CD4-positive, alpha-beta T cell (primary cell): ENCODE measurements at regions of chr1 and their contacts with region 1.

Region 1: GRCh38 chr1:109483672-109484518 is at the start of gene ATXN7L2:
- DNase-seq: peak; percentile 86 to 98 (median 92)
- ATAC-seq: peak; percentile 83
- H3K4me3 ChIP-seq: peak within 1 kb of the TSS; percentile 76
- H3K4me3 Mint-ChIP-seq: peak within 1 kb of the TSS; percentile 93
- H3K27ac ChIP-seq: peak within 1 kb of the TSS; percentile 74 to 78
- H3K27ac Mint-ChIP-seq: peak within 1 kb of the TSS; percentile 87
- H3K4me1 ChIP-seq: peaks cover 23% of the 10 kb centered on the region
- H3K4me1 Mint-ChIP-seq: peaks cover 39% of the 10 kb centered on the region
- H3K27me3 ChIP-seq: no peaks in the 10 kb centered on the region
- H3K27me3 Mint-ChIP-seq: peaks cover 1% of the 10 kb centered on the region
- CTCF ChIP-seq: no peak
- total RNA-seq, gene ATXN7L2: 11.8 to 13.1 TPM

Region 2: GRCh38 chr1:109112652-109113285 is 371.1 kb before region 1 on chr1:
- CTCF ChIA-PET with region 1: no interaction called
- POLR2A ChIA-PET with region 1: no interaction called
- intact Hi-C with region 1: loop called in 1 of 2 experiments (anchors 10 kb)
- DNase-seq: peak; percentile 84 to 94 (median 89)
- ATAC-seq: peak; percentile 52
- H3K4me3 ChIP-seq: peak overlapping the region; percentile 63
- H3K4me3 Mint-ChIP-seq: peak overlapping the region; percentile 94
- H3K27ac ChIP-seq: peak overlapping the region in 1 of 2 donors; percentile 51
- H3K27ac Mint-ChIP-seq: peak overlapping the region; percentile 98
- H3K4me1 ChIP-seq: peaks cover 26% of the 10 kb centered on the region
- H3K4me1 Mint-ChIP-seq: peaks cover 31% of the 10 kb centered on the region
- H3K27me3 ChIP-seq: no peaks in the 10 kb centered on the region
- H3K27me3 Mint-ChIP-seq: peaks cover 9% of the 10 kb centered on the region
- CTCF ChIP-seq: peak; percentile 93

Region 3: GRCh38 chr1:109282952-109283747 is 200.7 kb before region 1 on chr1 and contains the start of gene PSRC1:
- CTCF ChIA-PET with region 1: no interaction called
- POLR2A ChIA-PET with region 1: interaction called, 4 read pairs
- intact Hi-C with region 1: loop called in 1 of 2 experiments (anchors 5 kb)
- DNase-seq: peak; percentile 81 to 94 (median 85)
- ATAC-seq: peak; percentile 93
- H3K4me3 ChIP-seq: peak within 1 kb of the TSS; percentile 70
- H3K4me3 Mint-ChIP-seq: peak within 1 kb of the TSS; percentile 94
- H3K27ac ChIP-seq: peak within 1 kb of the TSS; percentile 31 to 59
- H3K27ac Mint-ChIP-seq: peak within 1 kb of the TSS; percentile 78
- H3K4me1 ChIP-seq: peaks cover 27% of the 10 kb centered on the region
- H3K4me1 Mint-ChIP-seq: peaks cover 19% of the 10 kb centered on the region
- H3K27me3 ChIP-seq: no peaks in the 10 kb centered on the region
- H3K27me3 Mint-ChIP-seq: no peaks in the 10 kb centered on the region
- CTCF ChIP-seq: peak; percentile 71
- total RNA-seq, gene PSRC1: 0.22 to 0.91 TPM

Region 4: GRCh38 chr1:109454497-109455133 is 29.3 kb before region 1 on chr1:
- CTCF ChIA-PET with region 1: no interaction called
- POLR2A ChIA-PET with region 1: no interaction called
- intact Hi-C with region 1: no loop called
- DNase-seq: no peak
- ATAC-seq: no peak
- H3K4me3 ChIP-seq: no peak overlapping the region
- H3K4me3 Mint-ChIP-seq: no peak overlapping the region
- H3K27ac ChIP-seq: no peak overlapping the region
- H3K27ac Mint-ChIP-seq: no peak overlapping the region
- H3K4me1 ChIP-seq: no peaks in the 10 kb centered on the region
- H3K4me1 Mint-ChIP-seq: no peaks in the 10 kb centered on the region
- H3K27me3 ChIP-seq: peaks cover 6 to 10% of the 10 kb centered on the region in 2 experiments
- H3K27me3 Mint-ChIP-seq: peaks cover 62% of the 10 kb centered on the region
- CTCF ChIP-seq: no peak

Region 5: DNA sequence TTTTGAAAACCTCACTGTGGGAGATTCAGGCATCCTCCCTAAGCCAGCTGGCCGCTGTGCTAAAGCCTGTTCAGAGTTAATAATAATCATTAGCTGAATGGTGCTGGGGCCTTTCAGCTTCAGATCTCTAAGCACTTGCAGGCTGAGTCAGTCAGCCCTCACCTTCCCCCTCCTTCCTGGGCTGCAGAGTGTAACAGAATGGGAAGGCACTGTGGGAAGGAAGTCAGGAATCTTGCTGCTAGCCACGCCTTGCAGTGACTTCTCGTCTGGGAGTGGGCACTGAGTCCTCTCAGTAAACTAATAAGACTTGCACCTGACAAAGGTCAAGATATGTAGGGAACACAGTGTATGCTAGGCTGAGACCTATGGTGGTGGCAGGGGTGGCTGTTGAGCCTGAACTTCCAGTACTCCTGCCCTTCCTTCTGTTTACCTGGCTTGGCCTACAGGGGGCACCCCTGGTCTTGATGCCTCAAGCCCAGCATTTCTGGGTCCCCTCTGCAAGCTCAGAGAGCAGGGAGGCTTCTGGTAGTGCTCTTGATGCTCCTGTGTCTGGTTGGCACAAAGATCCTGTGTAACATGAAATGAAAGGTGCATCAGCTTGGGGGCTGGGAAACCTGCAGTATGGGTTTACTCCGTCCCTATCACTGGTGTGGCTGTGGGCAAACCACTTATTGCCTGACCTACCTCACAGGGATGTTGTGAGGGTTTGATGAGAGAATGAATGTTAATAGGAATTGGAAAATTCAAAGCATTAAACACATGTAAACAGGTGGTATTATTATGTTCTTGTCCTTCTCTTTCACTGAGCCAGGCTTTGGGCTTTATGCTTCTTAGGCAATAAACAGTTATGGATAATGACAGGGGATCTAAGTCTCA is 16.0 kb after region 1 on chr1:
- CTCF ChIA-PET with region 1: no interaction called
- POLR2A ChIA-PET with region 1: interaction called, 21 read pairs
- intact Hi-C with region 1: no loop called
- DNase-seq: peak; percentile 27 to 84 (median 67)
- ATAC-seq: peak; percentile 32
- H3K4me3 ChIP-seq: no peak overlapping the region
- H3K4me3 Mint-ChIP-seq: peak overlapping the region; percentile 54
- H3K27ac ChIP-seq: peak overlapping the region; percentile 90 to 94
- H3K27ac Mint-ChIP-seq: peak overlapping the region; percentile 95
- H3K4me1 ChIP-seq: peaks cover 99% of the 10 kb centered on the region
- H3K4me1 Mint-ChIP-seq: peaks cover 93% of the 10 kb centered on the region
- H3K27me3 ChIP-seq: no peaks in the 10 kb centered on the region
- H3K27me3 Mint-ChIP-seq: no peaks in the 10 kb centered on the region
- CTCF ChIP-seq: peak; percentile 58

Region 6: GRCh38 chr1:109620841-109621286 is 137.0 kb after region 1 on chr1:
- CTCF ChIA-PET with region 1: no interaction called
- POLR2A ChIA-PET with region 1: interaction called, 5 read pairs
- intact Hi-C with region 1: loop called in 1 of 2 experiments (anchors 5 kb)
- DNase-seq: peak; percentile 91 to 99 (median 97)
- ATAC-seq: peak; percentile 86
- H3K4me3 ChIP-seq: peak overlapping the region; percentile 91
- H3K4me3 Mint-ChIP-seq: peak overlapping the region; percentile 99
- H3K27ac ChIP-seq: peak overlapping the region; percentile 85 to 95
- H3K27ac Mint-ChIP-seq: peak overlapping the region; percentile 89
- H3K4me1 ChIP-seq: peaks cover 80% of the 10 kb centered on the region
- H3K4me1 Mint-ChIP-seq: peaks cover 82% of the 10 kb centered on the region
- H3K27me3 ChIP-seq: no peaks in the 10 kb centered on the region
- H3K27me3 Mint-ChIP-seq: no peaks in the 10 kb centered on the region
- CTCF ChIP-seq: no peak

Region 7: DNA sequence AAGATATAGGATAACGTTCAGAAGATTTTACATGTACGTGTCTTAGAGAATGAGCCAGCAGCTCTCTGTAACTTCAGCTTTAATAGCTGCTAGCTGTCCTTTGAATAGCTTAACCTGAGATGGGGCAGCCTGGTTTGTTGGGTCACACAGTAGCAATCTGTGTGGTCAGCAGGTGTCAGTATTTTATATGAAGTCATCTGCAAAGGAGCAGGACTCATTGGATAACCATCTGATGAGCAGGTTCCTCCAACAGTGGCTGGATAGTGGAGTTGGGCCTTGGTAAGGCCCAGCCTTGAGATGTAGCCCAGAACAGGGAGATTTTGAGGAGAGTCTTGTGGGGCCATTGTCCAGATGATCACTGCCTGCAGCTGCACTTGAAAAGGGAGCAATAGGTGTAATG is 234.6 kb after region 1 on chr1:
- CTCF ChIA-PET with region 1: no interaction called
- POLR2A ChIA-PET with region 1: no interaction called
- intact Hi-C with region 1: no loop called
- DNase-seq: no peak
- ATAC-seq: no peak
- H3K4me3 ChIP-seq: no peak overlapping the region
- H3K4me3 Mint-ChIP-seq: no peak overlapping the region
- H3K27ac ChIP-seq: no peak overlapping the region
- H3K27ac Mint-ChIP-seq: no peak overlapping the region
- H3K4me1 ChIP-seq: no peaks in the 10 kb centered on the region
- H3K4me1 Mint-ChIP-seq: no peaks in the 10 kb centered on the region
- H3K27me3 ChIP-seq: no peaks in the 10 kb centered on the region
- H3K27me3 Mint-ChIP-seq: peaks cover 14% of the 10 kb centered on the region
- CTCF ChIP-seq: no peak

Region 8: DNA sequence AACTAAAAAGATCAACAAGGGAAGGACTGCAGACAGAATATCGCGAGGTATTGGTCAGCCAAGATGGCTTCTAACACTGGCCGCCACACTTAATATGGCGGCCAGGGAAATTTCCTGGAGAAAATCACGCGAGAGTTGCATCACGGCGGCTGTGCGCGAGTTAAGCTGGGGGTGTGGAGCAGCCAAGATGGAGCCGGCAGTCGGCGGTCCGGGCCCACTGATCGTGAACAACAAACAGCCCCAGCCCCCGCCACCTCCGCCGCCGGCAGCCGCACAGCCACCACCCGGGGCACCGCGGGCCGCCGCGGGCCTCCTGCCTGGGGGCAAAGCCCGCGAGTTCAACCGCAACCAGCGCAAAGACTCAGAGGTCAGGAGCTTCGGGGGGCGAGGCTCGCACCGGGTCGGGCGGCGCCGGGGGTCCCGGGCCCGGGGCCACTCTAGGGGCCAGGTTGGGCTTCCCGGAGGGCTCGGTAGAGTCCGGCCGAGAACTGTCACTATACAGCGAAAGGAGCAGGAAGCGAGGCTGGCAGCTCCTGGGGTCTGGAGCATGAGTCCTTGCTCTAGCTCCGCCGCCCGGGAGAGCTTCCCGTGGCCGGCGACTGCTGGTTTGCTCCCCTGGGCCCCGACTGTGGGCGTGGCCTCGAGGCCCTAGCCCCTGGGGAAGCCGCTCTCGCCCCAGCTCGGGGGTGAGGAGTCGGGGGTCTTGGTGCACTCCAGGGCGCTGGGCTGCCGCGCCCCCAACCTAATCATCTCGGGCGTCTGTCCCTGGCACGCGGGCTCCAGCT is 550.7 kb after region 1 on chr1 and contains the start of gene STRIP1:
- CTCF ChIA-PET with region 1: no interaction called
- POLR2A ChIA-PET with region 1: interaction called, 4 read pairs
- intact Hi-C with region 1: loop called in 1 of 2 experiments (anchors 2 kb)
- DNase-seq: peak; percentile 85 to 98 (median 89)
- ATAC-seq: peak; percentile 95
- H3K4me3 ChIP-seq: peak within 1 kb of the TSS; percentile 84
- H3K4me3 Mint-ChIP-seq: peak within 1 kb of the TSS; percentile 98
- H3K27ac ChIP-seq: peak within 1 kb of the TSS; percentile 37 to 64
- H3K27ac Mint-ChIP-seq: peak within 1 kb of the TSS; percentile 81
- H3K4me1 ChIP-seq: peaks cover 41% of the 10 kb centered on the region
- H3K4me1 Mint-ChIP-seq: peaks cover 56% of the 10 kb centered on the region
- H3K27me3 ChIP-seq: no peaks in the 10 kb centered on the region
- H3K27me3 Mint-ChIP-seq: no peaks in the 10 kb centered on the region
- CTCF ChIP-seq: no peak
- total RNA-seq, gene STRIP1: 74.3 to 80.9 TPM